MCF 10A (cell line): ENCODE measurements at regions of chr12 and their contacts with region 1.

Region 1: DNA sequence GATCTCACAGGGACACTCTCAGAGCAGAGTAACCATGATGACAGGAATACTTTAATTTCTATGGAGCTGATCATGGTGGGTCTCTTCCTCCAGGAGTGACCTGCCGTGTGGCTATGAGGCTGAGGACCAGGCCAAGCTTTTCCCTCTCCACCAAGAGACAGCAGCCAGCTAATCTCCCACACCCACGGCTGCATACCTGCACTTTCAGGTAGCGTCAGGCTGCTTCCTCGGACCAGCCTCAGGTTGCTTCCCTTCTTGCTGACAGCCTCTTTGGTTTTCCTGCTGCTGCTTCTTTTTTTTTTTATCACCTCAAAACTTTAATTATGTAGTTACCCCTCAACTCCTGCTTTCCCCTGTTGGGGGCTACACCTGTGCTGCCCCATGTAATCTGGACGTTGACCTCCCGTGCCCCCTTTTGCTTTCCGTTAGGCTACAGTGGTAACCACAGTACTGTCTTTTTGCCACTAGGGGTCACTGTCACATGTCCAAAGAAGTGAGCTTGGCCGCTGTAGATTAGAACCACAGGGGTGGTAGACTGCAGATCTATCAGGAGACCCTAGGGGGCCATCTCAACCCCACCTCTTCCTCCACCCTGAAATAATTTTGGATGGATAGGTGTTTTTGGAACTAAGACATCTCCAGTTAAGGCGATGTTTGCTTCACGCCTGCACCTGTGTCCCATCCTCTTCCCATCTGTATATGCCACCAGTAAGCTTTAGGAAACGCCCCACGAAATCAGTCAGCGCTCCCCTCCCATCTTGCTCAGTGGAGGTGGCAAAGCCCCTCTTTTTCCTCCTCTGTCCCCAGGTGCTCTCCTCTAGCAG is 7.8 kb upstream of the PIP4K2C start:
- DNase-seq: peak; percentile 79
- H3K4me3 Mint-ChIP-seq: no peak overlapping the region
- H3K27ac Mint-ChIP-seq: no peak overlapping the region
- H3K4me1 Mint-ChIP-seq: no peaks in the 10 kb centered on the region
- H3K27me3 Mint-ChIP-seq: no peaks in the 10 kb centered on the region
- CTCF ChIP-seq: peak; percentile 82

Region 2: GRCh38 chr12:57410534-57410933 is 172.7 kb before region 1 on chr12:
- CTCF ChIA-PET with region 1: no interaction called
- POLR2A ChIA-PET with region 1: no interaction called
- intact Hi-C with region 1: no loop called
- DNase-seq: no peak
- H3K4me3 Mint-ChIP-seq: no peak overlapping the region
- H3K27ac Mint-ChIP-seq: no peak overlapping the region
- H3K4me1 Mint-ChIP-seq: peaks cover 4% of the 10 kb centered on the region
- H3K27me3 Mint-ChIP-seq: no peaks in the 10 kb centered on the region
- CTCF ChIP-seq: no peak

Region 3: DNA sequence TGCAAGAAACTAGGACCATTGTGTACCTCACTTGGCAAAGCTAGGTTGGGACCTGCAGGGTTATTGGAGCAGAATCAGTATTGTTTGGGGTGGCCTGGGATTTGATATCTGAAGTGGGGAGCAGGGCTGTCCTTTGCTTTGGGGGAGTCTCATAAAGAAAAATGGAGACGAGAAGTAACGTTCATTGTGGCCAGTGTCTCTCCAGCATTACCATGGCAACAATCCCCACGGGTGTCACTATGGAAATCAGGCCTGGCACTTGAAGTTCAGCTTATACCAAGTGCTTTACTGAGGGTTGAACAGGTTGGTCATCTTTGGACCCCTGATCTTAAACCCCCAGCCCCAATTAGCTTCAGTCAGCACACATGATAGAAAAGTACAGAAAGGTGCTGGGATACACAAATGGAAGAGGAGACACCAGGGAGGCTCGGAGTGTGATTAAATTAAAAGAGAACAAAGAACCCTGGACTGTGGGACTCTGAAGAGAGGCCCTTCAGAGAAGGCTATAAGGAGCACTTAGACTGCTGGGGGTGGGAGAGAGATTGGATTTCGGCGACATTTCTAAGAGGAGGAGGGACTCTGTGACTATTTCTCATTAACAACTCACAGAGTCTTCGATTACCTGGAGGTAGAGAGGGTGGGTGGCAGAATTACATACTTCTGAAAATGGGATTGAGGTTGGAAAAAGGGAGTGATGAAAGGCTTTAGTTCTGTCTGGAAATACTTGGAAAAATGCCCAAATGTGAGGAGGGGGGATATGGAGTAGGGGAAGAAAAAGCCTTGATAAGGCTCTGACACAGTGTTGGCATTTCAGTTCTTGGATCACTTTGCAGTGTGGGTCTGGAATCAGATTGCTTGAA is 29.6 kb before region 1 on chr12:
- CTCF ChIA-PET with region 1: interaction called, 14 read pairs
- POLR2A ChIA-PET with region 1: no interaction called
- intact Hi-C with region 1: no loop called
- DNase-seq: no peak
- H3K4me3 Mint-ChIP-seq: no peak overlapping the region
- H3K27ac Mint-ChIP-seq: no peak overlapping the region
- H3K4me1 Mint-ChIP-seq: peaks cover 7% of the 10 kb centered on the region
- H3K27me3 Mint-ChIP-seq: peaks cover 9% of the 10 kb centered on the region
- CTCF ChIP-seq: no peak

Region 4: GRCh38 chr12:57614178-57614947 is 31.1 kb after region 1 on chr12:
- CTCF ChIA-PET with region 1: interaction called, 72 read pairs
- POLR2A ChIA-PET with region 1: no interaction called
- intact Hi-C with region 1: no loop called
- DNase-seq: peak; percentile 44
- H3K4me3 Mint-ChIP-seq: no peak overlapping the region
- H3K27ac Mint-ChIP-seq: no peak overlapping the region
- H3K4me1 Mint-ChIP-seq: no peaks in the 10 kb centered on the region
- H3K27me3 Mint-ChIP-seq: peaks cover 21% of the 10 kb centered on the region
- CTCF ChIP-seq: no peak

Region 5: DNA sequence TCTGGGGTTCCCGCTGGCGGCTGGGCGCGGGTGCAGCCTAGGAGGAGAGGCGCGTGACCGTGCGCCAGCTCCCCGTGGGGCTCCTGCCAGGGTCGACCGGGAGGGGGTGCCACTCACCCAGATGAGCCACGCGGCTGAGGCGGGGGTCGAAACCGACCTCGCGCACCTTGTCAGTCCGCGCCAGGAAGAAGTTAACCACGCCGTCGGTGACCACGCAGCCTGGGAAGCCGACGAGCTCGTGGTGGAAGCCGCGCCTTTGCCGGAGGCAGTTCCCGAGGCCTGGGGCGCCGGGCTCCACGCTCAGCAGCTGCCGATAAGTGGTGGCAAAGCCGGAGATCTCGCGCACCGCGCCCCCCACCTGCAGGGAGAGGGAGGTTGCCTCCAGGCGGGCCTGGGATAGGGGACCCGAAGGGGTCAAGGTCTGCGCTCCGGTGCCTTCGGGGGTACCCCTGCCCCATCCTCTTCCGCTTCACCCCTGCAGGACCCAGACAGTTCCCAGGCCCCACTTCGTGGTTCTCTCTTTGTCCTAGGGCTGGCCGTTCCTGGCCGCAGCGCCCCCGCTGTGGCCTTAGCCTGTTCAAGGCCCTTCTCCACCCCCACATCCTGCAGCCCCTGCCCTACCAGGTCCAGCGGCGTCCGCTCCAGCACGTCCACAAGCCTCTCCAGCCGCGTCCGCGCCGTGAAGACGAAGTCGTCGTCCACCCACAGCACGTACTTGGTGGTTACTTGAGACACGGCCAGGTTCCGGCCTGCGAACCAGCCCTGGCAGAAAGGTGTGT is 44.5 kb after region 1 on chr12:
- CTCF ChIA-PET with region 1: interaction called, 72 read pairs
- POLR2A ChIA-PET with region 1: interaction called, 3 read pairs
- intact Hi-C with region 1: no loop called
- DNase-seq: no peak
- H3K4me3 Mint-ChIP-seq: no peak overlapping the region
- H3K27ac Mint-ChIP-seq: no peak overlapping the region
- H3K4me1 Mint-ChIP-seq: no peaks in the 10 kb centered on the region
- H3K27me3 Mint-ChIP-seq: peaks cover 29% of the 10 kb centered on the region
- CTCF ChIP-seq: no peak

Region 6: DNA sequence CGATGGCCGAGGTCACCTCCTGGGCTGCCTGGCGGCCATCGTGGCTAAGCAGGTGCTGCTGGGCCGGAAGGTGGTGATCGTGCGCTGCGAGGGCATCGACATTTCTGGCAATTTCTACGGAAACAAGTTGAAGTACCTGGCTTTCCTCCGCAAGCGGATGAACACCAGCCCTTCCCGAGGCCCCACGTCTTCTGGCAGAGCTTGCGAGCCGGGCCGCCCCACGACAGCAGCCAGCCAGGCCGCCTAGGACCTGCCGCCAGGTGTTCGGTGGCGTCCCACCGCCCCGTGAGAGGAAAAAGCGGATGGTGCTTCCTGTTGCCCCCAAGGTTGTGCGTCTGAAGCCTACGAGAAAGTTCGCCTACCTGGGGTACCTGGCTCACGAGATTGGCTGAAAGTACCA is 91.5 kb after region 1 on chr12:
- CTCF ChIA-PET with region 1: no interaction called
- POLR2A ChIA-PET with region 1: no interaction called
- intact Hi-C with region 1: no loop called
- DNase-seq: no peak
- H3K4me3 Mint-ChIP-seq: no peak overlapping the region
- H3K27ac Mint-ChIP-seq: no peak overlapping the region
- H3K4me1 Mint-ChIP-seq: no peaks in the 10 kb centered on the region
- H3K27me3 Mint-ChIP-seq: no peaks in the 10 kb centered on the region
- CTCF ChIP-seq: no peak

Region 7: DNA sequence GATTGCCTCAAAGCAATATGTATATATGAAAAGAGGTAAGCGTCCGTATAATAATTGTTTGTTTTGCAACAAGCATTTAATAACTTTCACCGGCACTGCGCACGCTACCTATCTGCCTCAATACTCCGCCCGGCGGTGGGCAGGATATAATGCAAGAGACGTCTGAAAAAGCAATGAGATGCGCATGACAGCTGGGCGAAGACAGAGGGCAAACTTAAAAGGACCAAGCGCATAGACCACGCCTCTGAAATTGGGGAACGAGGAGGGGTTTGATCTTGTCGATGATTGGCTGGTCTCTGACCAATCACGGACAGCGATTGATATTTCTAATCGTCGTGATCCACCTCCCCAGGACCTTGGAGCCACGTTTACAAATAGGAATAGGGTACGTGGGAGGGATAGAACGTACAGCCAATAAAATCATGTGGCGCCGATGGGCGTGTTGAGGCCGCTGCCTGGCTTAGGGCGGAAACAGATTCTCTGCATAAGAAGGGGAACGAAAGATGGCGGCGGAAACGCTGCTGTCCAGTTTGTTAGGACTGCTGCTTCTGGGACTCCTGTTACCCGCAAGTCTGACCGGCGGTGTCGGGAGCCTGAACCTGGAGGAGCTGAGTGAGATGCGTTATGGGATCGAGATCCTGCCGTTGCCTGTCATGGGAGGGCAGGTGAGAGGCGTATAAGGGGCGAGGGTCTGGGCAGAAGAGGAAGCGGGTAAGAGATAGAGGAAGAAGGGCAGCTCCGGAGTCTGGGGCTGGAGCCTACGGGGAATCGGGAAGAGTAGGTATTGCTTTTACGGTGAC is 110.6 kb after region 1 on chr12 and contains the start of gene OS9:
- CTCF ChIA-PET with region 1: interaction called, 24 read pairs
- POLR2A ChIA-PET with region 1: interaction called, 4 read pairs
- intact Hi-C with region 1: loop called (anchors 1 kb)
- DNase-seq: peak; percentile 100
- H3K4me3 Mint-ChIP-seq: no peak within 1 kb of the TSS
- H3K27ac Mint-ChIP-seq: no peak within 1 kb of the TSS
- H3K4me1 Mint-ChIP-seq: no peaks in the 10 kb centered on the region
- H3K27me3 Mint-ChIP-seq: peaks cover 11% of the 10 kb centered on the region
- CTCF ChIP-seq: peak; percentile 48
- total RNA-seq, gene OS9: 125 and 173 TPM in 2 replicates

Region 8: GRCh38 chr12:57735952-57736740 is 152.9 kb after region 1 on chr12:
- CTCF ChIA-PET with region 1: interaction called, 13 read pairs
- POLR2A ChIA-PET with region 1: no interaction called
- intact Hi-C with region 1: loop called (anchors 2 kb)
- DNase-seq: peak; percentile 56
- H3K4me3 Mint-ChIP-seq: peak overlapping the region; percentile 66
- H3K27ac Mint-ChIP-seq: no peak overlapping the region
- H3K4me1 Mint-ChIP-seq: peaks cover 11% of the 10 kb centered on the region
- H3K27me3 Mint-ChIP-seq: peaks cover 64% of the 10 kb centered on the region
- CTCF ChIP-seq: peak; percentile 37

Region 9: DNA sequence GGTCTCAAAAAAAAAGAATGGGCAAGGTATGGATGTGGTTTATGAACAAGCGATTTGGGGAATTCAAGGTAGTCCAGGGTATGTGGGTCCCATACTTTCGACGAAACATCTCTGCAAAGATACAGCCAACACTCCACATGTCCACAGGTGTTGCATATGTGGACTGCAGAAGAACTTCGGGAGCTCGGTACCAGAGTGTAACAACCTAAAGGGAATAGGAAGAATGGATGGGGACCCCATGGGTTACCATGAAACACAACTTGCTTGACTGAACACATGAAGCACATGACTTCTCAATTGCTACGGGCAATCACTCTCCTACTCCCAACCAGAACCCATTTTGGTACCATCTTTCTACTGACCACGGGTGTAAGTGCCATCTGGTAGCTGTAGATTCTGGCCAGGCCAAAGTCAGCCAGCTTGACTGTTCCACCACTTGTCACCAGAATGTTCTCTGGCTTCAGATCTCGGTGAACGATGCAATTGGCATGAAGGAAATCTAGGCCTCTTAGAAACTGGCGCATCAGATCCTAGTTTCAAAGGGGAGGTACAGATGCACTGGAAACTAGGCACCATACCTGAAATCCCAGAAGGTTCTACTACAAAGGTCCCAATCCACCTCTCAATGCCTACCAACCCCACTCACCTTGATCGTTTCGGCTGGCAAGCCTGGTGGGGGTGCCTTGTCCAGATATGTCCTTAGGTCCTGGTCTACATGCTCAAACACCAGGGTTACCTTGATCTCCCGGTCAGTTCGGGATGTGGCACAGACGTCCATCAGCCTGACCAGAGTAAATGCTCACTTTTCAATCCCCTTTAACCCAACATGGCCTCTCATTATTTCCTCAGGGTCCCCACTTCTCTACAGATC is 167.6 kb after region 1 on chr12:
- CTCF ChIA-PET with region 1: no interaction called
- POLR2A ChIA-PET with region 1: no interaction called
- intact Hi-C with region 1: no loop called
- DNase-seq: no peak
- H3K4me3 Mint-ChIP-seq: peak overlapping the region; percentile 92
- H3K27ac Mint-ChIP-seq: peak overlapping the region; percentile 93
- H3K4me1 Mint-ChIP-seq: peaks cover 42% of the 10 kb centered on the region
- H3K27me3 Mint-ChIP-seq: no peaks in the 10 kb centered on the region
- CTCF ChIP-seq: no peak

Region 10: GRCh38 chr12:57853864-57854556 is 270.8 kb after region 1 on chr12:
- CTCF ChIA-PET with region 1: no interaction called
- POLR2A ChIA-PET with region 1: no interaction called
- intact Hi-C with region 1: no loop called
- DNase-seq: no peak
- H3K4me3 Mint-ChIP-seq: no peak overlapping the region
- H3K27ac Mint-ChIP-seq: no peak overlapping the region
- H3K4me1 Mint-ChIP-seq: no peaks in the 10 kb centered on the region
- H3K27me3 Mint-ChIP-seq: peaks cover 16% of the 10 kb centered on the region
- CTCF ChIP-seq: no peak